ENCODE measurements at regions of chr4 and their contacts with region 1.

Region 1: DNA sequence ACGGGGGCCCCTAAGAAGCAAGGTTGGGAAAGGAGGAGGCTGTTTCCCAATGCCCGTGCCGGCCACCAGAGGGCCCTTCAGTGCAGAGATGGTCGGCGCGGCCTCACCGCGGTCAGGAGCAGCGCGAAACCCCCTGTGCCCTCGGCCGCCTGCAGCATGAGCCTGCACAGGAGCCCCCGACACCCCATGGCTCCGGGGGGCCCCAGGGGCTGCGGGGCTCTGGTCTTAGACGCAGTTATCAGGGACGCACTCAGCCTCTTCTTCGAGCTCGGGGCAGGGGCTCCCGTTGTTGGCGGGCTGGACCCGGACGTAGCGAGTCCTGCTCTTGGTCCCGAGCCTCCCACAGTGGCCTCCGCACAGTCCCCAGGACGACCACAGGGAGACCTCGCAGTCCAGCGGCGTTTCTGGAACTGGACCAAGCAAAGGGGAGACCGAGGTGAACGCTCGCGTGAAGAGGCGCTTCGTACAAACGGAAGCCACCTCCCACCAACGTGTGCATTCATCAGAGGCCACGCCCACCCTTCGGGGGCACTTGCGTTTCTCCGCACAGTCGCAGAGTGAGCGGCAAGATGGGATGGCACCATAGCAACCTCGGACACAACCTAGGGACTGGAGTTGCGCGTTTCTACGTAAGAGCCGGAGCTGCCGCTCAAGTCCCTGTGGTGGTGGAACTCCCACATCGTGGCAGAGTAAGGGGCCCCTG is 5.0 kb downstream of the SPON2 start:
- DNase-seq: peak; percentile 75 to 88 (median 82)
- H3K4me3 ChIP-seq: peak overlapping the region; percentile 47
- H3K27ac ChIP-seq: no peak overlapping the region
- H3K4me1 ChIP-seq: peaks cover 6% of the 10 kb centered on the region
- H3K27me3 ChIP-seq: no peaks in the 10 kb centered on the region
- CTCF ChIP-seq: peak; percentile 86 to 90 (median 89)
- EP300 ChIP-seq: no peak
- POLR2A ChIP-seq: no peak

Region 2: DNA sequence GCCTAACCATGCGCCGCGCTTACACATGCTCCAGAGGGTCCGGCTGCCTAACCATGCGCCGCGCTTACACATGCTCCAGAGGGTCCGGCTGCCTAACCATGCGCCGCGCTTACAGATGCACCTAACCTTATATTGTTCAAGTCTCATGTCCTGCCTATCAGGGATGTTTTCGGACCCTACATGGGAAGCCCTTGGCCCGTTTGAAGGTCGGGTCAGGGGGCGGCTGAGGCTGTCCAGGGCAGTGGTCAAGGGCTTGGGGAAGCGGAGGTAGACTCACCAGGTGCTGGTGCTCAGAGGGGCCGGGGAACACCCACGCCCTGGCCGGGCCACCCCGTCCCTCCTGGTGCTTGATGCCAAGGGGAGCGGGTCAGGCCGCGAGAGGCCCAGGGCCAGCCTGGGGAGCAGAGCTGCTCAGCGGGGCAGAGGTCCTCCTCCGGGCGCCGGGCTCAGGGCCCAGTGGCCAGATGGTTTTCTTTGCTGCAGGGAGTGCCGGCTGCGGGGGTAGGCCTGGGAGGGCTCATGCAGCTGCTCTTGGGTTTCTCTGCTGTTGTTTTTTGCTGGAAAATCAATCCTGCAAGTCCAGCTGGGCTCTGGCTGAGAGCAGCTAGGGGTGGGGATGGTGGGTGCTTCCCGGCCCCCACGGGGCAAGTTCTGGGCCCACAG is 40.3 kb after region 1 on chr4:
- intact Hi-C with region 1: loop called in 3 of 4 experiments (anchors 5 kb)
- DNase-seq: peak; percentile 81 to 93 (median 86)
- H3K4me3 ChIP-seq: no peak overlapping the region
- H3K27ac ChIP-seq: peak overlapping the region; percentile 26 to 50
- H3K4me1 ChIP-seq: peaks cover 38% of the 10 kb centered on the region
- H3K27me3 ChIP-seq: no peaks in the 10 kb centered on the region
- CTCF ChIP-seq: no peak
- EP300 ChIP-seq: no peak
- POLR2A ChIP-seq: no peak

Region 3: GRCh38 chr4:1227816-1228215 is 60.4 kb after region 1 on chr4:
- intact Hi-C with region 1: loop called in 2 of 4 experiments (anchors 2 to 5 kb)
- DNase-seq: no peak
- H3K4me3 ChIP-seq: no peak overlapping the region
- H3K27ac ChIP-seq: no peak overlapping the region
- H3K4me1 ChIP-seq: peaks cover 5% of the 10 kb centered on the region
- H3K27me3 ChIP-seq: no peaks in the 10 kb centered on the region
- CTCF ChIP-seq: no peak
- EP300 ChIP-seq: no peak
- POLR2A ChIP-seq: no peak

Region 4: DNA sequence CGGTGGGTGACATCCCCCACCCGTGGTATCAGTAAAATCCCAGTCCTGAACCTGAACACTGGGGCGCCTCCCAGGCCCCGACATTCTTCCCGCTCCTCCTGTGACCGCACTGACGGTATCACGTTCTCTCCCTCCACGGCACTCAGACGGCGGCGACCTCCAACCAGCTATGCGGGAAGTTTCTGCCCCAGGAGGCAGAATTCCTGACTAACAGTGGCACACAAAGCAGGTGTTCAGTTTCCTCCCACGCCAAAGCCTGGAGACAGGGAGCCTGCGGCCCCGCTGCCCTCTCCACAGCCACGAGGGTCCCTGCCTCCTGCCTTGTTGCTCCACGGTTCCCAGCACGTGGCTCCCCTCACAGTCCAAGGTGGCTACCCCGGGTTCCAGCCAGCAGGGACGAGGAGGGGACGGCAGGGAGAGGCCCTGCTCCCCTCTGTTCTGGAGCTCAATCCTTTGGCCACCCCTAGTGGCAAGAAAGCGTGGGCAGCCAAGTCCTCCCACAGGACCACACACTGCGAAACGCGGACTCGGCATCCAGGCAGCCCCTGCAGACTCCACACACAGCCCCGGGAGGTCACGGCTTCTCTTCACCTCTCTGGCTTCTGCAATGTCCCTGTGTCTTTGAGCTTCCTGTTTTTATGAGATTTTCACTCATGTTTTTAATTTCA is 66.4 kb after region 1 on chr4:
- intact Hi-C with region 1: loop called in 2 of 4 experiments (anchors 2 to 5 kb)
- DNase-seq: peak; percentile 60 to 80 (median 68)
- H3K4me3 ChIP-seq: no peak overlapping the region
- H3K27ac ChIP-seq: no peak overlapping the region
- H3K4me1 ChIP-seq: peaks cover 5% of the 10 kb centered on the region
- H3K27me3 ChIP-seq: no peaks in the 10 kb centered on the region
- CTCF ChIP-seq: peak in 2 of 3 donors; percentile 23 to 73
- EP300 ChIP-seq: no peak
- POLR2A ChIP-seq: no peak

Region 5: GRCh38 chr4:1249148-1249730 is 81.8 kb after region 1 on chr4:
- intact Hi-C with region 1: loop called (anchors 5 kb)
- DNase-seq: peak; percentile 84 to 91 (median 87)
- H3K4me3 ChIP-seq: peak overlapping the region; percentile 83
- H3K27ac ChIP-seq: peak overlapping the region; percentile 76 to 97
- H3K4me1 ChIP-seq: peaks cover 38% of the 10 kb centered on the region
- H3K27me3 ChIP-seq: no peaks in the 10 kb centered on the region
- CTCF ChIP-seq: no peak
- EP300 ChIP-seq: no peak
- POLR2A ChIP-seq: no peak

Region 6: GRCh38 chr4:1346781-1347409 is 179.5 kb after region 1 on chr4 and contains the start of gene UVSSA:
- intact Hi-C with region 1: loop called in 3 of 4 experiments (anchors 5 to 10 kb)
- DNase-seq: peak; percentile 100
- H3K4me3 ChIP-seq: peak within 1 kb of the TSS; percentile 83
- H3K27ac ChIP-seq: peak within 1 kb of the TSS; percentile 75 to 100
- H3K4me1 ChIP-seq: peaks cover 2% of the 10 kb centered on the region
- H3K27me3 ChIP-seq: no peaks in the 10 kb centered on the region
- CTCF ChIP-seq: no peak
- EP300 ChIP-seq: peak; percentile 94
- POLR2A ChIP-seq: peak; percentile 97
- total RNA-seq, gene UVSSA: 12.1 to 24.7 (median 19.1) TPM

Region 7: DNA sequence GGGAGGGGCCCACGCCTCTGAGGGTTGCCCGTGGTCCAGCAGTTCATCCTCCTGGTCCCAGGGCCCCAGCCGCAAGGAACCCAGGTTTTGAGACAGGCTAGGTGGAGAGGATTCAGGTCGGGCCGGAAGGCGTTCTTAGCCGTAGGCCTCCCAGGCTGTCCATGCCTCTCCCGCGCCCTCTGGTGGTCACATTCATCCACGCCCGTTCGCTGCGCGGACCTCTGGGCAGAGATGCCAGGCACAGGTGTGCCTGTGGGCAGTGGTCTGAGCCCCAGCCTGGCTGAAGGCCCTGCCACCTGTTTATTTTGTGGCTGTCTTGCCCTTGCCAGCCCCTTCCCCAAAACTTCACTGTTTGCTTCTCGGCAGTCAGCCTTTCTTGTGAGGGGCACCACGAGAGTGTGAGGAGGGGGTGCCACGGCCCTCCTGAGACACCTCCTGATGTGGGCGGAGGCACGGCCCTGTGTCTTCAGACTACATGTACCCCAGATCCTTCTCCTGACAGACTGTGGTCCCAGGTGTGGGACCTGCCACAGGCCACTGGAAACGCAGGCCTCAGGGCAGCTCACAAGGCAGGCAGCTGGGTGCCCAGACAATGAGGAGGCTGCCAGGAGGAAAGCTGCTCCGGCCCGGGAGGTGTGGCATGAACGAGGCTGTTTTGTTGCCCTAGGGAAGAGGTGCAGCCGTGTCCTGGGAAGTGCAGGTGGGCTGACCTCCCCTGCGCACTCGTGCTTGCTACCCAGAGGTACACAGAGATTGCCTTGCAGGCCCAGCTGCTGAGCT is 184.6 kb after region 1 on chr4:
- intact Hi-C with region 1: loop called in 3 of 4 experiments (anchors 5 to 10 kb)
- DNase-seq: peak; percentile 80 to 91 (median 88)
- H3K4me3 ChIP-seq: no peak overlapping the region
- H3K27ac ChIP-seq: no peak overlapping the region
- H3K4me1 ChIP-seq: no peaks in the 10 kb centered on the region
- H3K27me3 ChIP-seq: no peaks in the 10 kb centered on the region
- CTCF ChIP-seq: peak; percentile 90 to 93 (median 92)
- EP300 ChIP-seq: no peak
- POLR2A ChIP-seq: no peak

Region 8: GRCh38 chr4:3047464-3048286 is 1880.3 kb after region 1 on chr4:
- intact Hi-C with region 1: no loop called
- DNase-seq: peak; percentile 43 to 69 (median 66)
- H3K4me3 ChIP-seq: no peak overlapping the region
- H3K27ac ChIP-seq: no peak overlapping the region
- H3K4me1 ChIP-seq: no peaks in the 10 kb centered on the region
- H3K27me3 ChIP-seq: no peaks in the 10 kb centered on the region
- CTCF ChIP-seq: peak; percentile 23 to 53 (median 39)
- EP300 ChIP-seq: no peak
- POLR2A ChIP-seq: no peak

Measured in ovary (tissue), 10 donors.